Dendritic cell treated with granulocyte-macrophage colony-stimulating factor and Interleukin-4, amounts not matched to agents 40 ng/mL and 50 ng/mL, for 4 days (primary cell): ENCODE measurements at regions of chr2 and their contacts with region 1.

Region 1: GRCh38 chr2:58046585-58047372 is at the start of gene VRK2:
- H3K4me3 Mint-ChIP-seq: peak within 1 kb of the TSS; percentile 92
- H3K27ac Mint-ChIP-seq: peak within 1 kb of the TSS; percentile 98
- H3K4me1 Mint-ChIP-seq: peaks cover 28% of the 10 kb centered on the region
- H3K27me3 Mint-ChIP-seq: no peaks in the 10 kb centered on the region

Region 2: GRCh38 chr2:58107803-58108710 is 61.3 kb after region 1 on chr2:
- intact Hi-C with region 1: loop called (anchors 5 kb)
- H3K4me3 Mint-ChIP-seq: peak overlapping the region; percentile 57
- H3K27ac Mint-ChIP-seq: peak overlapping the region; percentile 77
- H3K4me1 Mint-ChIP-seq: peaks cover 37% of the 10 kb centered on the region
- H3K27me3 Mint-ChIP-seq: no peaks in the 10 kb centered on the region

Region 3: GRCh38 chr2:58237741-58238140 is 191.0 kb after region 1 on chr2:
- intact Hi-C with region 1: loop called (anchors 5 kb)
- H3K4me3 Mint-ChIP-seq: no peak overlapping the region
- H3K27ac Mint-ChIP-seq: no peak overlapping the region
- H3K4me1 Mint-ChIP-seq: no peaks in the 10 kb centered on the region
- H3K27me3 Mint-ChIP-seq: no peaks in the 10 kb centered on the region

Region 4: GRCh38 chr2:58319481-58319880 is 272.7 kb after region 1 on chr2:
- intact Hi-C with region 1: no loop called
- H3K4me3 Mint-ChIP-seq: no peak overlapping the region
- H3K27ac Mint-ChIP-seq: no peak overlapping the region
- H3K4me1 Mint-ChIP-seq: no peaks in the 10 kb centered on the region
- H3K27me3 Mint-ChIP-seq: no peaks in the 10 kb centered on the region

Region 5: DNA sequence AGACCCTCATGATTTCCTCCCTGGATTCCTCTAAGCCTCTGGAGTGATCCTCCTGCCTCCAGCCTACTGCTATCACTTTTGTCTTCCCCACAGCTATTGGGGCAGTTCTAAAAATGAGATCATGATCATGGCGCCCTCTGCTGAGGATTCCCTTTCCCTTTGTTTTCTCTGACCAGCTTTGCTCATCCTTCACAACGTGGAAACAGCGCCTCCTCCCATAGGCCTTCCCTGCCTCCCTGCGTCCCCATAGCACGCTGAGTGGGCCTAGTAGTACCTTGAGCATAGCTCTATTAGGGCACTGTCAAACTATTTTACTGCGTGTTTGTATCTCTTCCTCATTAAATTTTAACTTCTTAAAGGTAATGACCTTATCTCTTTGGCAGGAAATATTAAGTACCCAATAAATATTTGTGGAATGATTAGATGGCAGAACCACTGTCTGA is 401.3 kb after region 1 on chr2:
- intact Hi-C with region 1: no loop called
- H3K4me3 Mint-ChIP-seq: no peak overlapping the region
- H3K27ac Mint-ChIP-seq: no peak overlapping the region
- H3K4me1 Mint-ChIP-seq: peaks cover 19% of the 10 kb centered on the region
- H3K27me3 Mint-ChIP-seq: no peaks in the 10 kb centered on the region